CD4-positive, alpha-beta T cell (primary cell): ENCODE measurements at regions of chr4 and their contacts with region 1.

Region 1: GRCh38 chr4:17576932-17577665 is at the start of gene LAP3:
- DNase-seq: peak; percentile 97 to 100 (median 99)
- ATAC-seq: peak; percentile 84
- H3K4me3 ChIP-seq: peak within 1 kb of the TSS; percentile 94
- H3K4me3 Mint-ChIP-seq: peak within 1 kb of the TSS; percentile 91
- H3K27ac ChIP-seq: peak within 1 kb of the TSS; percentile 81 to 91
- H3K27ac Mint-ChIP-seq: peak within 1 kb of the TSS; percentile 94
- H3K4me1 ChIP-seq: peaks cover 21% of the 10 kb centered on the region
- H3K4me1 Mint-ChIP-seq: peaks cover 34% of the 10 kb centered on the region
- H3K27me3 ChIP-seq: no peaks in the 10 kb centered on the region
- H3K27me3 Mint-ChIP-seq: no peaks in the 10 kb centered on the region
- CTCF ChIP-seq: no peak
- total RNA-seq, gene LAP3: 61.6 TPM

Region 2: DNA sequence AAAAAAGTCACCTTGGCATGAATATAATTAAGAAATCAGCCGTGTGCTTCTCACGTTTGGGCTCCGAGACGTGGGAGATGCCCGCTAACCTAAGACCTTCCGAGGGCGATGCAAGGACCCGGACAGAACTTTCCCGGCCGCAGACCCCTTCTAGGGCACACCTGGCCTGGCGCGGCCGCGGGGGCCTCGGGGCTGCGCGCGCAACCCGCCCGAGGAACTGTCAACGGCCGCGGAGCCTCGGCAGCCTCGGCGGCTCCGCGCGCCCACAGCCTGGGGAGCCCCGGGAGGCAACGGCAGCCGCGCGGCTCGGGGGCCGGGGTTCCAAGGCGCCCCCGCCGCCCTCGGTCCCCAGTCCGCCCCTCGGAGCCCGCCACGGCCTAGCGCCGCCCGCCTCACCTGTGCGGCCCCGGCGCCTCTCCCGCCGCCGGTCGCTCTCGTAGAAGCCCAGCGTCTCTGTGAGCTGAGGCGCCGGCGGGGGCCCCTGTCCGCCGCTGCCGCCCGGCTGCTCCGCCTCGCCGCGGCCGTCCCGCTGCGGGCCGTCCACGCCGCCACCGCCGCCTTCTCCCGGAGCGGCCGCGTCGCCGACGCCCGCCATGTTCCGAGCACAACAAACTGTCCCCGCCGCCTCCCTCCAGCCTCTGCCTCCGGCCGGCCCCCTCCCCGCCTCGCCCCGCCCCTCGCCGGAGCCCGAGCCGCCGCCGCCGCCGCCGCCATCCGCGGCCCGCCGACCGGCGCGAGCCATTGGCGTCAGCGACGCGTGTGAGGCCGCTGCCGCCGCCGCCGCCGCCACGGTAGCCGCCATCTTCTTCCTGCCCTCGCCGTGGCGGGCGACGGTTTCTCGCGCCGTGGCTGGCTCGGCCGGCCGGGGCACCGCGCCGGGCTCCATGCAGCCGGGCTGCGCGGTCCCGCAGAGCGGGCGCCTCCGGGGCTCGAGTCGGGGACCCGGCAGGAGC is 1351.0 kb before region 1 on chr4 and contains the start of gene TAPT1:
- CTCF ChIA-PET with region 1: no interaction called
- POLR2A ChIA-PET with region 1: no interaction called
- intact Hi-C with region 1: loop called in 1 of 2 experiments (anchors 10 kb)
- DNase-seq: peak; percentile 45 to 89 (median 71)
- ATAC-seq: peak; percentile 52
- H3K4me3 ChIP-seq: peak within 1 kb of the TSS; percentile 80
- H3K4me3 Mint-ChIP-seq: peak within 1 kb of the TSS; percentile 97
- H3K27ac ChIP-seq: peak within 1 kb of the TSS; percentile 71 to 73
- H3K27ac Mint-ChIP-seq: peak within 1 kb of the TSS; percentile 97
- H3K4me1 ChIP-seq: peaks cover 21% of the 10 kb centered on the region
- H3K4me1 Mint-ChIP-seq: peaks cover 65% of the 10 kb centered on the region
- H3K27me3 ChIP-seq: no peaks in the 10 kb centered on the region
- H3K27me3 Mint-ChIP-seq: no peaks in the 10 kb centered on the region
- CTCF ChIP-seq: no peak
- total RNA-seq, gene TAPT1: 70.6 to 77.1 TPM

Region 3: DNA sequence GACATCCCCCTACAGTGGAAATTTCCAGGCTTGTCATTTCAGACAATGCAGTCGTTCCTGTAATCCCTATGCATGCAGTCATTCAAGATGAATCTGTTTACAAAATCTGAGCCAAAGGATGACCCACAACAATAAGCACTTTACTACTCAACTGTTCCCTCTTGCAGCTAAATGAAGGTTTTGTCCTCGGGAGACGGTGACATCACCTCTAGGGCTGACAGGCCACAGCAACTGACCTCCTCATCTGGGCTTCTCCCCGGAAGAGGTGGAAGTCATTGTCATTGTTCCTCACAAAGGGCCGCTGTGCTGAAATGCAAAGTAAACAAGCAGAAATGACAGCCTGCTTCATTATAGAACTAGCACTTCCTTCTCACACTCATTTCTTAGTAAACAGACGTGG is 32.9 kb before region 1 on chr4:
- CTCF ChIA-PET with region 1: interaction called, 6 read pairs
- POLR2A ChIA-PET with region 1: interaction called, 4 read pairs
- intact Hi-C with region 1: loop called in 1 of 2 experiments (anchors 2 kb)
- DNase-seq: peak in 2 of 14 experiments; percentile 11 to 38
- ATAC-seq: no peak
- H3K4me3 ChIP-seq: no peak overlapping the region
- H3K4me3 Mint-ChIP-seq: no peak overlapping the region
- H3K27ac ChIP-seq: no peak overlapping the region
- H3K27ac Mint-ChIP-seq: no peak overlapping the region
- H3K4me1 ChIP-seq: no peaks in the 10 kb centered on the region
- H3K4me1 Mint-ChIP-seq: no peaks in the 10 kb centered on the region
- H3K27me3 ChIP-seq: no peaks in the 10 kb centered on the region
- H3K27me3 Mint-ChIP-seq: peaks cover 23% of the 10 kb centered on the region
- CTCF ChIP-seq: no peak

Region 4: GRCh38 chr4:17614416-17615299 is 37.6 kb after region 1 on chr4 and contains the start of gene MED28:
- CTCF ChIA-PET with region 1: no interaction called
- POLR2A ChIA-PET with region 1: interaction called, 45 read pairs
- intact Hi-C with region 1: loop called (anchors 1 kb)
- DNase-seq: peak; percentile 90 to 98 (median 94)
- ATAC-seq: peak; percentile 93
- H3K4me3 ChIP-seq: peak within 1 kb of the TSS; percentile 94
- H3K4me3 Mint-ChIP-seq: peak within 1 kb of the TSS; percentile 93
- H3K27ac ChIP-seq: peak within 1 kb of the TSS; percentile 68 to 92
- H3K27ac Mint-ChIP-seq: peak within 1 kb of the TSS; percentile 94
- H3K4me1 ChIP-seq: peaks cover 55% of the 10 kb centered on the region
- H3K4me1 Mint-ChIP-seq: peaks cover 50% of the 10 kb centered on the region
- H3K27me3 ChIP-seq: no peaks in the 10 kb centered on the region
- H3K27me3 Mint-ChIP-seq: no peaks in the 10 kb centered on the region
- CTCF ChIP-seq: no peak
- total RNA-seq, gene MED28: 50.5 to 64.7 TPM

Region 5: DNA sequence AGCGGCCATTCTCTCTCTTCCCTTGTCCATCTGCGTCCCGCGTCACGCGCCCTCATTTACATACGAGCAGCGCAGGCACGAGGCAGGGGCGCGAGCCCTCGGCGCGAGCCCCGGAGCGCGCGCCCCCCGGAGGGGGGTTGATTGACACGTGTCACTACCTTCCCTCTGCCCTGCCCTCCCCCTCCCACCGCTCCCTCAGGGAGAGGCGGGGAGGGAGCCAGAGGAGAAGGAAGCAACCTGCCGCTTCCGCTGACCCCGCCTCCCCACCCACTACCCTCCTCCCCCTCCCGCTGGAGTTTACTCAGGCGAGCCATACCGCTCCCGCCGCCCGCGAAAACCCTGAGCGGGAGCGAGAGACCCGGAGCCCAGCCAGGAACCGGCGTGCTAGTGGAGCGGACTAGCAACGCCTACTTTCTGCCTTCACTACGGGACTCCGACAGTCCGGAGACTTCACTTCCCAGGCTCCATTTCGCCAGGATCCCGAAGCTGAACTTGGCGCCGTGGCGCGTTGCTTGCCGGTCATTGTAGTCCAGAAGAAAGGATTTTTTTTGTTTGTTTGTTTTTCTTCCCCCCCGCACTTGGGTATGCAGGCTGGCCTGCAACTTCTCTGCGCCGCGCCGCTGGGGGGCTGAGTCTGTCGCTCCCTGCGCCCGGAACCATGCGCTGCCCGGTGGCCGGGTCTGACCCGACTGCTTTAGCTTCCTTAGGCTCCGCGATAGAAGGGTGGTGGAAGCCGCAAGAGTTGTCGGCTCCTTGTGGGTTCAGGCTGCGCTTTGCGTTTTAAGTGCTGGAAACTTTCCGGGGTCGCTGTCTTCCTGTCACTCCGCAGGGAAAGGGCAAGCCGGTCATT is 444.8 kb after region 1 on chr4 and contains the start of gene LCORL:
- CTCF ChIA-PET with region 1: no interaction called
- POLR2A ChIA-PET with region 1: interaction called, 4 read pairs
- intact Hi-C with region 1: loop called (anchors 2 to 10 kb)
- DNase-seq: peak; percentile 70 to 95 (median 80)
- ATAC-seq: peak; percentile 83
- H3K4me3 ChIP-seq: peak within 1 kb of the TSS; percentile 75
- H3K4me3 Mint-ChIP-seq: peak within 1 kb of the TSS; percentile 99
- H3K27ac ChIP-seq: peak within 1 kb of the TSS; percentile 61 to 77
- H3K27ac Mint-ChIP-seq: peak within 1 kb of the TSS; percentile 84
- H3K4me1 ChIP-seq: peaks cover 15% of the 10 kb centered on the region
- H3K4me1 Mint-ChIP-seq: peaks cover 32% of the 10 kb centered on the region
- H3K27me3 ChIP-seq: peaks cover 3 to 11% of the 10 kb centered on the region in 2 experiments
- H3K27me3 Mint-ChIP-seq: peaks cover 33% of the 10 kb centered on the region
- CTCF ChIP-seq: no peak
- total RNA-seq, gene LCORL: 6.3 to 6.5 TPM